Activated CD4-positive, alpha-beta memory T cell treated with anti-CD3 and anti-CD28 coated beads for 36 hours (primary cell): ENCODE measurements at regions of chrX and their contacts with region 1.

Region 1: DNA sequence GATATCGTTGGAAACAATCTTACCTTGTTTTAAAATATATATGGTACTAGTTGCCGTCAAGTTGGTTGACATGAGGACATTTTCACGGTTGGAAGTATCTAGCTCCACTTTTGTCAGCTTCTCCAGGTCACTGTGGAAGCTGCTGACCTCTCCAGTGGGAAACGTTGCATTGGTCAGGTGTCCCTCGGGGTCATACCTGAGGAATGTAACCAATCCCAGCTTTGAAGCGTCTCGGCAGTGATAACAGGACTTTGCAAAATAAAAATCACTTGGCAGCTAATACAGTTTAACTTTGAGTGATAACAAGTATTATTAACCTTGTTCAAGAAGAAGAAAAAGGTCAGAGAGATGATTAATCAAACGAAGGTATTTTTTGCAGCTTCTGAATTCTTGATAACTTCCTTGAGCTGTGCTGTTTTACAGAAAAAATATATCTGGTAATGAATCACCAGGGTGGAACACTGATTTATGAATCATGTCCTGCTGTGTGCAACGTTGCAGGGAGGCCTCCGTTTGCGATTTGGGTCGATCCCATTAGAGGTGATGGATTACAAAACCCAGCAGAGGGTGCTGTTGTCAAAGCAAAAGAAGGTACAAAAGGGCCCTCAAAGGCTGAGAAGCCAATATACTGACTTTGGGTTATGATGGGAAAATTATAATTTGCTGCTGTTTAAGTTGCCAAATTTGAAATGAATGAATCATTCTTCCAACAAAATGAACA is 60.1 kb downstream of the SH2D1A start:
- DNase-seq: peak; percentile 77
- H3K4me3 Mint-ChIP-seq: no peak overlapping the region
- H3K27ac Mint-ChIP-seq: peak overlapping the region; percentile 13
- H3K4me1 Mint-ChIP-seq: peaks cover 12% of the 10 kb centered on the region
- H3K27me3 Mint-ChIP-seq: no peaks in the 10 kb centered on the region

Region 2: GRCh38 chrX:124117325-124117724 is 289.1 kb before region 1 on chrX:
- CTCF ChIA-PET with region 1: no interaction called
- POLR2A ChIA-PET with region 1: no interaction called
- intact Hi-C with region 1: no loop called
- DNase-seq: no peak
- H3K4me3 Mint-ChIP-seq: no peak overlapping the region
- H3K27ac Mint-ChIP-seq: no peak overlapping the region
- H3K4me1 Mint-ChIP-seq: no peaks in the 10 kb centered on the region
- H3K27me3 Mint-ChIP-seq: no peaks in the 10 kb centered on the region

Region 3: GRCh38 chrX:124388562-124388961 is 17.9 kb before region 1 on chrX:
- CTCF ChIA-PET with region 1: interaction called, 10 read pairs
- POLR2A ChIA-PET with region 1: no interaction called
- intact Hi-C with region 1: no loop called
- DNase-seq: peak; percentile 61
- H3K4me3 Mint-ChIP-seq: no peak overlapping the region
- H3K27ac Mint-ChIP-seq: no peak overlapping the region
- H3K4me1 Mint-ChIP-seq: peaks cover 15% of the 10 kb centered on the region
- H3K27me3 Mint-ChIP-seq: no peaks in the 10 kb centered on the region

Region 4: GRCh38 chrX:124736553-124737240 is 330.2 kb after region 1 on chrX:
- CTCF ChIA-PET with region 1: no interaction called
- POLR2A ChIA-PET with region 1: no interaction called
- intact Hi-C with region 1: loop called (anchors 10 kb)
- DNase-seq: peak; percentile 63
- H3K4me3 Mint-ChIP-seq: peak overlapping the region; percentile 56
- H3K27ac Mint-ChIP-seq: peak overlapping the region; percentile 16
- H3K4me1 Mint-ChIP-seq: peaks cover 24% of the 10 kb centered on the region
- H3K27me3 Mint-ChIP-seq: no peaks in the 10 kb centered on the region

Region 5: GRCh38 chrX:125004799-125005198 is 598.3 kb after region 1 on chrX:
- CTCF ChIA-PET with region 1: no interaction called
- POLR2A ChIA-PET with region 1: no interaction called
- intact Hi-C with region 1: loop called (anchors 10 kb)
- DNase-seq: no peak
- H3K4me3 Mint-ChIP-seq: no peak overlapping the region
- H3K27ac Mint-ChIP-seq: no peak overlapping the region
- H3K4me1 Mint-ChIP-seq: peaks cover 5% of the 10 kb centered on the region
- H3K27me3 Mint-ChIP-seq: no peaks in the 10 kb centered on the region

Region 6: DNA sequence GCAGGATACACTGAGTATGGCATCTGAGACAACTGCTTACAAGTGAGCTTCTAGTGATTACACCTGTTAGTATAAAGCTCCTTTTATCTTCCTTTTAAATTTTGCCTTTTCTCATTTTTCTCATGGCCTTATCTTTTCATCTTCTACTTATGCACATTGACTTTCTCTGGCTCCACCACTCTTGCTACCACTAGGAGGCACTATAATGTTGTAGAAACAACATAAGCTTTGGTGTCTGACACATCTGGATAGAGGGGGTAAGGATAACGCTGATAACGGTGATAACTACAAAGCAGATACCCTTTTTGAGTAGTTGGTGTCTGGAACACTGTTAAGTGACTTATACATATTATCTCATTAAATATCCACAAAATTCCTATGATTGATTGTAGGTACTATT is 725.8 kb after region 1 on chrX:
- CTCF ChIA-PET with region 1: interaction called, 20 read pairs
- POLR2A ChIA-PET with region 1: no interaction called
- intact Hi-C with region 1: loop called (anchors 1 kb)
- DNase-seq: no peak
- H3K4me3 Mint-ChIP-seq: no peak overlapping the region
- H3K27ac Mint-ChIP-seq: no peak overlapping the region
- H3K4me1 Mint-ChIP-seq: no peaks in the 10 kb centered on the region
- H3K27me3 Mint-ChIP-seq: no peaks in the 10 kb centered on the region